ENCODE measurements at regions of chr9 and their contacts with region 1.

Region 1: GRCh38 chr9:91131433-91131839 is 230.3 kb downstream of the AUH start:
- DNase-seq: peak in 7 of 9 experiments; percentile 19 to 78 (median 57)
- ATAC-seq: peak; percentile 91
- H3K4me3 ChIP-seq: no peak overlapping the region
- H3K4me3 Mint-ChIP-seq: no peak overlapping the region
- H3K27ac ChIP-seq: peak overlapping the region in 1 of 2 experiments; percentile 40
- H3K27ac Mint-ChIP-seq: no peak overlapping the region
- H3K4me1 ChIP-seq: no peaks in the 10 kb centered on the region
- H3K4me1 Mint-ChIP-seq: peaks cover 11% of the 10 kb centered on the region
- H3K27me3 ChIP-seq: no peaks in the 10 kb centered on the region
- H3K27me3 Mint-ChIP-seq: peaks cover 2% of the 10 kb centered on the region
- CTCF ChIP-seq: no peak

Region 2: DNA sequence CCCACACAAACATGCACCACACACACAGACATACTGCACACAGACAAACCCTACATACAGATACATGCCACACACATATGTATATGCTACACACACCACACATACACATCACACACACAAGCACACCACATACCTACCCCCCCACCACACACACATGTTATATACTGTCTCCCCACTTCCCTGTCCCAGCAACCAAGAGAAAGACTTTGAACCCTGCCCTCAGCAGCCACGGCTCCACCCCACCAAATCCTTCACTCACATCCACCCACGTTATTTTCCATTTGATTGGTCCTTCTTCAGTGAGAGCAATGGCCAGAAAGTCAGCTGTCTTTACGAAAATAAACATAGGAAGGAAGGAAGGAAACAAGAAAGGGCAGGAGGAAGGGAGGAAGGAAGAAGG is 968.6 kb before region 1 on chr9:
- CTCF ChIA-PET with region 1: no interaction called
- POLR2A ChIA-PET with region 1: no interaction called
- intact Hi-C with region 1: loop called in 1 of 2 experiments (anchors 5 kb)
- DNase-seq: no peak
- ATAC-seq: no peak
- H3K4me3 ChIP-seq: no peak overlapping the region
- H3K4me3 Mint-ChIP-seq: no peak overlapping the region
- H3K27ac ChIP-seq: no peak overlapping the region
- H3K27ac Mint-ChIP-seq: no peak overlapping the region
- H3K4me1 ChIP-seq: no peaks in the 10 kb centered on the region
- H3K4me1 Mint-ChIP-seq: peaks cover 5% of the 10 kb centered on the region
- H3K27me3 ChIP-seq: no peaks in the 10 kb centered on the region
- H3K27me3 Mint-ChIP-seq: peaks cover 8% of the 10 kb centered on the region
- CTCF ChIP-seq: no peak

Measured in CD8-positive, alpha-beta T cell (primary cell).